ENCODE measurements at regions of chr19 and their contacts with region 1.

Region 1: DNA sequence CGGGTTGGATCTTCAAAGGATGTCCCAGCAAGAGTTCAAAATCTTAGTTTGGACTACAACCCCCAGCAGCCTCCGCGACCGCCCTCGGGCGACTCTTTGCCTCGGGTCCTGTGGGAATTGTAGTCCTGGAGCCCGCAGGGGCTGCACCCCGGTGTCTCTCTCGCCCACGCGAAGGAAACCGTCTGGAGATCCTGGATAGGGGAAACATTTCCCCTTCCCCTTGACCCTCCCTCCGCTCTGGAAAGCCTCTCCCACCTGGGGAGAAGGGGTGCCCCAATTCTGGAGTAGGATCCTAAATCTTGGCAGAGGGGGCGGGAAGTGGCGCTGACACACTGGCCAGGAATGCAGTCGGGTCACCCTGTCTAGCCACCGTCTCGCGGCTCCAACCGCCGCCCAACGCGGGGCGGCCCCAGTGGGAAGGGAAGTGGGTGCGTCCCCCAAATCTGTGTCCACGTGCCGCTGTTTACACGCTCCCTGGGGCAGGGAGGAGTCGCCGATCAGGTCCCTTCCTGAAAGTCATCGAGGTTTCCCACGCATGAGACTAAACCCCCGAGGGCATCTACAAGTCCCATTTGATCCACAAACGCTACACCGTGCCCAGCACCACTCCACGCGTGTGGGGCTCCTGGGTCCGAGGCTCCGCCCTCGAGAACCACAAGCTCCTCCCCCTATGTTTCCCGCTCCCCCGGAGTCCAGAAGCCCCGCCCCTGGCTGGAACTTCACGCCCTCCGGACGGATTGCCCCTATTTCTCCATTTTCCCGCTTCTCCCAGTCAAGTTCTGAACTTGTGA is 761 bp upstream of the PPP1R13L start:
- DNase-seq: no peak
- H3K4me3 ChIP-seq: peak overlapping the region; percentile 88
- CTCF ChIP-seq: no peak

Region 2: GRCh38 chr19:45376045-45376724 is 29.4 kb before region 1 on chr19:
- CTCF ChIA-PET with region 1: interaction called, 10 read pairs
- POLR2A ChIA-PET with region 1: interaction called, 5 read pairs
- DNase-seq: peak; percentile 86
- H3K4me3 ChIP-seq: no peak overlapping the region
- CTCF ChIP-seq: no peak

Region 3: DNA sequence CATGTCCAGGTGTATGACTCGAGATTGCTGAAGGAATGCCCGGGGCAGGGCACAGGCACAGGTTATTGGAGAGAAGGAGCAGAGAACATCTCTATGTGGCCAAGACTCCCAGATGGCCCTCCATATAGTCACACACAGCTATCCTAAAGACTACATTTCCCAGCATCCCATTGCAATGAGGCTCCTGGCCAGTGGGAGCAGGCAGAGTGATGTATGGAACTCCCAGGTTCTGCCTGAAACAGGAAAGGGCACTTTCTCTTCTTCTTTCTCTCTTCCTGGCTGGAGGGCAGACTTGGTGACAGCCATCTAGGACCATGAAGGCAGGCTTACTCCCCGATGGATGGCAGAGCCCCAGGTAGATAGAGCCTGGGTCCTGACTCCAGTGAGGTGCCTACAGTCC is 14.3 kb before region 1 on chr19:
- CTCF ChIA-PET with region 1: interaction called, 17 read pairs
- POLR2A ChIA-PET with region 1: no interaction called
- DNase-seq: no peak
- H3K4me3 ChIP-seq: no peak overlapping the region
- CTCF ChIP-seq: no peak

Region 4: DNA sequence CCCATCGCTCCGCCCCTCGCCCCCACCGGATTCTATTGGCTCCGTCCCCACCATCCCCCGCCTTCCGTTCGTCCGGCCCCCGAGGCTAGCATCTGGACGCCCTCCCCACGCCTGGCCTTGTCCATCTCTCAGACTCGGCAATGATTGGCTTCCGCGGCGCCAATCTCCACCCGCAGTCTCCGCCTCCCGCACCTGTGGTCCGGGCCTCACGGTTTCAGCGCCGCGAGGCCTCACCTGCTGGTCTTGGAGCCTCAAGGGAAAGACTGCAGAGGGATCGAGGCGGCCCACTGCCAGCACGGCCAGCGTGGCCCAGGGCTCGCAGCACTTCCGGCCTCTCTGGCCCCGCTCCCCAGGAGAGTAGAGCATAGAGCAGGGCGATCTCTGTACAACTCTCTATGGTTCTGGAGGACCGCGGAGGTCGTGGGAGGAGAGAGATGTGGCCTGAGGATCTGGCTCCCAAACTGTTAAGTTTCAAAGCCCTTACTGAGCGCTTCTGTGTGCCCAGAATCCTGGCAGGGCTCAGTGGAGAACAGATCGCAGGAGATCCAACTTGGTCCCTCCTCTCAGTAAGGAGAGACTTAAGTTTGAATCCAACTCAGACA is 18.1 kb after region 1 on chr19 and contains the start of gene ERCC1:
- CTCF ChIA-PET with region 1: interaction called, 10 read pairs
- POLR2A ChIA-PET with region 1: no interaction called
- DNase-seq: no peak
- H3K4me3 ChIP-seq: peak within 1 kb of the TSS; percentile 82
- CTCF ChIP-seq: no peak

Region 5: DNA sequence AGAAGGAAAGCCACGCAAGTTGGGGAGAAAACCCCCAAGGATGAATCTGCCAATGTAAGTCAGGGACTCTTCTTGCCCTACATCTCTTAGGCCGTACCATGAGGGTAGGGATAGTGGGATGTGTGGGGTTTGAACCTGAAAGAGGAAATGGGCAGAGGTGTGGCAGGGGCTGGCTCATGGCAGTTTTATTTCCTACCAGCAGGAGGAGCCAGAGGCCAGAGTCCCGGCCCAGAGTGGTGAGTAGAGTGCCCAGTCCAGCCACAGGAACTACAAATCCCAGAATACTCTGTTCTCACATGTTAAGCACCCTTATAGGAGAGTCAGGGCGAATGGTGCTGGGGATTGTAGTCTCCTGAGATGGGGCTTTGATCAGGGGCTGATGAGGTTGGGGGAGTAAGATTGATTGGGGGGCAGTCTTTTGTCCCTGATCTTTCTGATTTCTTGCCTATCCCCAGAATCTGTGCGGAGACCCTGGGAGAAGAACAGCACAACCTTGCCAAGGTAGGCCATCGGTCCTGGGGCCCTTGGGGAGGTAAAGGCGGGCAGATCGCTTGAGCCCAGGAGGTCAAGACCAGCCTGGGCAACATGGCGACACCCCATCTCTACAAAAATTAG is 118.1 kb after region 1 on chr19:
- CTCF ChIA-PET with region 1: no interaction called
- POLR2A ChIA-PET with region 1: no interaction called
- DNase-seq: no peak
- H3K4me3 ChIP-seq: no peak overlapping the region
- CTCF ChIP-seq: peak; percentile 73